ENCODE measurements at regions of chr15 and their contacts with region 1.

Region 1: DNA sequence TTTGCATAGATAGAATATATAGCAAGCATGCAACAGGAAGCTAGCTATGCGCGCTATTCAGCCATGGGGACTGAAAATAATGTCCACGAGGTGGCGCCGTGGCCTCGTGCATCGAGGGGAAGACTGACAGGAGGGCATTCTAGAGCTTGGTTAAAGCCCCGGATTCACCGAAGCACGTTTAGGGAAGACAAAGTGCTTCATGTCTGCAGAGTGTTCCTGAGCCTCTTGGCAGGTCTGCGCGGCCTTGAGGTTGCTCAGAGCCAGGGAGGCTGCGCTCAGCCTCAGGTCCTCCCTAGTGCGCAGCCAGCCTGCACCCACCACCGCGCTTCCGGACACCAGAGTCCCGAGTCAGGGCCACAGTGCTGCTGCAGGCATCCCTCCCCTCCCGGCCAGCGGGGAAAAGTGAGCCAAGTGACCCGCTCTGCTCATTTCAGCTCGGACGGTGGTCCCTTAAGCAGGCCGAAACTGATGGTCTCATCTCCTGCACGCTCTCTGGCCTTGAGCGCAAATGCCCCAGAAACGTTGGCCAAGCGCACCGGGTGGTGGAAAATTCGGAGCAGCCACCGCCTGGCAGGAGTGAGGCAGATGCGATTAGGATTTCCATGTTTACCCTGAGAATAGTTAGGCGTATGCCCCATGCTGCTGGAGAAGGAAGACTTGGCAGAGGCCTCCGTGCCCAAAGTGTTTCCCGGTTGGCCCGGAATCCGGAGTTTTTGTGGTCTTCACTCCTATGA is 24.8 kb downstream of the GABRA5 start:
- DNase-seq: peak; percentile 77 to 97 (median 87)

Region 2: GRCh38 chr15:27017168-27017809 is 125.7 kb after region 1 on chr15:
- intact Hi-C with region 1: loop called (anchors 1 kb)
- DNase-seq: peak in 4 of 10 donors; percentile 54 to 87 (median 67)

Region 3: GRCh38 chr15:27358751-27359434 is 467.3 kb after region 1 on chr15:
- intact Hi-C with region 1: loop called (anchors 5 kb)
- DNase-seq: peak; percentile 22 to 95 (median 69)

Region 4: GRCh38 chr15:28123408-28124023 is 1231.9 kb after region 1 on chr15:
- intact Hi-C with region 1: loop called (anchors 2 kb)
- DNase-seq: peak in 8 of 10 donors; percentile 66 to 95 (median 76)

Measured in posterior cingulate gyrus (tissue), 11 donors.